T-cell (primary cell): ENCODE measurements at regions of chr3 and their contacts with region 1.

Region 1: DNA sequence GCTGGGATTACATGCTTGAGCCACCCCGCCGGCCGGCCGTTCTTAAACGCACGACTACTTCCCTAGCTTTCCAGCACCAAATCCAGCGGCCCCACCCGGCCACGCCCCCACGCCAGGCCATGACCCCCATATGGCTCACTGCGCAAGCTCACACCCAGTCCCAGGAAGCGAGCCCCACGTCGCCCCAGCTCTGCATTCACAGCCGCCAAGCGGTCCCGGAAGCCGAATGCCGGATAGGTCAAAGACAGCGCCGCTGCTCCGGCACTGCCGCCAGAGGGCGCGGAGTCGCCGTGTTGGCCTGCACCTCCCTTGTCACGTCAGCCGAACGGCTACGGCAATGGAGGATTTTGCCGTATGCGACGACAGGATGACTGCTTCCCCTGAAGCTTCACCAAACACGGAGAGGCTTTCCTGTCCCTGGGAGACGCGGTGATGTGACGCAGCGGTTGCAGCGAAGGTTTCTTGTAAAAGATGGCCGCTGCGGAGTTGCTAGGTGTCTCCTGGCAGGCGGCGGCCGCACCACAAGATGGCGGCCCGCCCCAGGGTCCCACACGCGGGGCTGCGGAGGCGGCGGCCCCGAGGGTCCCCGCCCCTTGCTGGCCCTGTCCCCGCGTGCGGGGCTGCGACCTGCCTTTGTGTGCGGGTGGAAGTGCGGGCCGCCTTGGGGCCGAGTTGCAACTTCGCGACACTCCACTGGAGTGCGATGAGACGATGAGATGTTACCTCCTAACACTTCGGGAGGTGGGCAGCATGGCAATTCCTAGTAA is 30.2 kb upstream of the RPN1 start:
- DNase-seq: peak; percentile 93 to 97 (median 95)
- ATAC-seq: peak; percentile 87 to 94 (median 92)
- H3K4me3 ChIP-seq: peak overlapping the region; percentile 79 to 80
- H3K4me3 Mint-ChIP-seq: peak overlapping the region; percentile 95 to 99 (median 97)
- H3K27ac ChIP-seq: peak overlapping the region; percentile 97
- H3K27ac Mint-ChIP-seq: peak overlapping the region; percentile 99
- H3K4me1 ChIP-seq: peaks cover 17 to 30% of the 10 kb centered on the region in 2 experiments
- H3K4me1 Mint-ChIP-seq: peaks cover 27 to 55% (median 29%) of the 10 kb centered on the region in 3 donors
- H3K27me3 ChIP-seq: no peaks in the 10 kb centered on the region
- H3K27me3 Mint-ChIP-seq: no peaks in the 10 kb centered on the region

Region 2: GRCh38 chr3:128726691-128727031 is 45.9 kb after region 1 on chr3:
- CTCF ChIA-PET with region 1: interaction called, 3 to 11 read pairs
- POLR2A ChIA-PET with region 1: interaction called, 7 to 9 read pairs
- DNase-seq: peak in 17 of 35 experiments; percentile 3 to 57 (median 10)
- ATAC-seq: peak; percentile 3 to 24 (median 14)
- H3K4me3 ChIP-seq: peak overlapping the region; percentile 87 to 90
- H3K4me3 Mint-ChIP-seq: peak overlapping the region; percentile 88 to 92 (median 91)
- H3K27ac ChIP-seq: peak overlapping the region; percentile 73
- H3K27ac Mint-ChIP-seq: peak overlapping the region; percentile 76 to 84
- H3K4me1 ChIP-seq: peaks cover 27 to 52% of the 10 kb centered on the region in 2 experiments
- H3K4me1 Mint-ChIP-seq: peaks cover 58 to 63% (median 60%) of the 10 kb centered on the region in 3 donors
- H3K27me3 ChIP-seq: no peaks in the 10 kb centered on the region
- H3K27me3 Mint-ChIP-seq: no peaks in the 10 kb centered on the region

Region 3: DNA sequence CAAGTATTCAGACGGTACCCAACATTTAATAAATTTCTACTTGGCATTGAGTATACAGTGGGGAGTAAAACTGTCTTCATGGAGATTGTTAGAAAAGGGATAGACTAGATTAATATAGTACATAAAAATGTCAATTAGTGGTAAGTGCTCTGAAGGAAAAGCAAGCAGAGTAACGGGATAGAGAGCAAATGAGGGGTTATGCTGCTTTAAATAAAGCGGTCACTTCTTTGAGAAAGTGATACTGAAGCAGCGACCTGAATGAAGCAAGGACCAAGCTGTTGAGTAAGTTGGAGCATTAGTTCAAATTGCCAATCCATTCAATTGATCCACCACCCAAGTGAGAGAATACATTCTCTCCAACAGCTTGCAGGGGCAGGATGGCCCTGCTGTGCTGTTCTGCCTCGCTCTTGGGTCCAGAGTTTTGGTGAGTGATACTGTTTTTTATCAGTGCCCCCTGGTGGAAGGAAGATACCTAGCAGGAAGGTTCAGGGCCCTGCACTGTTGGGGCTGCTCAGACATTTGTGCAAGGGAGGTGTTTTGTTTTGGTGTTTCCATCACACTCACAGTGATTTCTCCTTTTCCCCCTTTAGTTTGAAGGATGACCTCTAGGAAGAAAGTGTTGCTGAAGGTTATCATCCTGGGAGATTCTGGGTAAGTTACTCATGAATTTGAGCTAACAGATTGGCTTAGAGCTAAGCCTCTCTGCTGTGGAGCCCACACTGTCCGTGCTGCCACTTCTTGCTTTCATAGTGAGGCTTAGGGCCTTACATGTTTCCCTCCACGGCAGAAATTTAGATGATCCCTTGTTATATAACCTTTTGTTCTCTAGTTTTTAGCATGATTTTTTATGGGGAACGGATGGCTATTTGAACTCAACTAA is 114.2 kb after region 1 on chr3:
- CTCF ChIA-PET with region 1: interaction called, 8 to 28 read pairs
- POLR2A ChIA-PET with region 1: no interaction called
- DNase-seq: peak; percentile 33 to 85 (median 56)
- ATAC-seq: peak; percentile 94 to 95 (median 94)
- H3K4me3 ChIP-seq: no peak overlapping the region
- H3K4me3 Mint-ChIP-seq: peak overlapping the region in 2 of 3 donors; percentile 23 to 25
- H3K27ac ChIP-seq: peak overlapping the region; percentile 32
- H3K27ac Mint-ChIP-seq: peak overlapping the region; percentile 78 to 86
- H3K4me1 ChIP-seq: peaks cover 34 to 38% of the 10 kb centered on the region in 2 experiments
- H3K4me1 Mint-ChIP-seq: peaks cover 57 to 69% (median 64%) of the 10 kb centered on the region in 3 donors
- H3K27me3 ChIP-seq: no peaks in the 10 kb centered on the region
- H3K27me3 Mint-ChIP-seq: no peaks in the 10 kb centered on the region

Region 4: GRCh38 chr3:128845778-128846485 is 165.1 kb after region 1 on chr3:
- CTCF ChIA-PET with region 1: interaction called, 3 to 17 read pairs
- POLR2A ChIA-PET with region 1: no interaction called
- DNase-seq: peak; percentile 51 to 81 (median 71)
- ATAC-seq: peak; percentile 74 to 86 (median 85)
- H3K4me3 ChIP-seq: peak overlapping the region; percentile 52 to 54
- H3K4me3 Mint-ChIP-seq: peak overlapping the region; percentile 78 to 83 (median 80)
- H3K27ac ChIP-seq: peak overlapping the region; percentile 54
- H3K27ac Mint-ChIP-seq: peak overlapping the region; percentile 82 to 87
- H3K4me1 ChIP-seq: peaks cover 3 to 17% of the 10 kb centered on the region in 2 experiments
- H3K4me1 Mint-ChIP-seq: peaks cover 13 to 17% (median 14%) of the 10 kb centered on the region in 3 donors
- H3K27me3 ChIP-seq: no peaks in the 10 kb centered on the region
- H3K27me3 Mint-ChIP-seq: no peaks in the 10 kb centered on the region